ENCODE measurements at regions of chr12 and their contacts with region 1.

Region 1: DNA sequence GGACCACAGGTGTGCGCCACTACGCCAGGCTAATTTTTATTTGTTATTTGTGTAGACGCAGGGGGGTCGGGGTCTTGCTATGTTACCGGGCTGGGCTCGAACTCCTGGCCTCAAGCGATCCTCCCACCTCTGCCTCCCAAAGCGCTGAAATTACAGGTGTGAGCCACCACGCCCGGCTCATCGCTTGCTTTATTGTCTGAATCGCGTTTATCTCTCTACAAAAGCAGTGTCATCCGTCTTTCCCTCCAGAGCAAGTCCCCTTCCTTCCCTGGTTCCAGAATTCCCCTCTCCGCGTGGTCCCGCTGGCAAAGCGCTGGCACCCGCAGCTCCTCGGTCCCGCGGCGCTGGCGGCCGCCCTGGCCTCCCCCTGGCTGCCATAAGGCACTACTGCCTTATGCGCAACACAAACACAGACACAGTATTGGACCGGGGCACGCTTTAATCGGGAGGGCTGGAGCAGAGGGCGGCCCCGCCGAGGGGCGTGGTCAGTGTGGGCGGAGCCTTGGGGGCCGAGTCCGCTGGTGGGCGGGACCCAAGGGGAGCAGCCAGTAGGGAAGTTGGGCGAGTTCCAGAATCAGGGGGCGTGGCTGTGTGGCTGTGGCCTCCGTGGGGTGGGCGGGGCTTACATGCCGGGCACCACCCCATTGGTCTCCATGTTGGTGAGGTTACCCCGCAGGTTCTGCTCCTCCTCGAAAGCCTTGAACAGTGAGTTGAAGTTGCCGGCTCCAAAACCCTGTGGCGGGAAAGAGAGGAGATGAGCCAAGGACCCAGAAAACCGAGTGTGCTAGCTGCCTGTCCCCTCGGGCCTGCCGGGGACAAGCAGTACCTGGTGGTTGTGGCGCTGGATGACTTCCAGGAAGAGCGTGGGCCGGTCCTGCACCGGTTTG is 19.3 kb downstream of the HPD start:
- DNase-seq: peak; percentile 100
- ATAC-seq: peak; percentile 99

Region 2: GRCh38 chr12:121888478-121889266 is 49.3 kb after region 1 on chr12 and contains the start of gene PSMD9:
- intact Hi-C with region 1: loop called (anchors 10 kb)
- DNase-seq: peak; percentile 99
- ATAC-seq: peak; percentile 99
- total RNA-seq, gene PSMD9: 35.4 TPM

Region 3: GRCh38 chr12:122137681-122138080 is 298.3 kb after region 1 on chr12:
- intact Hi-C with region 1: no loop called
- DNase-seq: no peak
- ATAC-seq: no peak